ENCODE measurements at regions of chr7 and their contacts with region 1.

Region 1: DNA sequence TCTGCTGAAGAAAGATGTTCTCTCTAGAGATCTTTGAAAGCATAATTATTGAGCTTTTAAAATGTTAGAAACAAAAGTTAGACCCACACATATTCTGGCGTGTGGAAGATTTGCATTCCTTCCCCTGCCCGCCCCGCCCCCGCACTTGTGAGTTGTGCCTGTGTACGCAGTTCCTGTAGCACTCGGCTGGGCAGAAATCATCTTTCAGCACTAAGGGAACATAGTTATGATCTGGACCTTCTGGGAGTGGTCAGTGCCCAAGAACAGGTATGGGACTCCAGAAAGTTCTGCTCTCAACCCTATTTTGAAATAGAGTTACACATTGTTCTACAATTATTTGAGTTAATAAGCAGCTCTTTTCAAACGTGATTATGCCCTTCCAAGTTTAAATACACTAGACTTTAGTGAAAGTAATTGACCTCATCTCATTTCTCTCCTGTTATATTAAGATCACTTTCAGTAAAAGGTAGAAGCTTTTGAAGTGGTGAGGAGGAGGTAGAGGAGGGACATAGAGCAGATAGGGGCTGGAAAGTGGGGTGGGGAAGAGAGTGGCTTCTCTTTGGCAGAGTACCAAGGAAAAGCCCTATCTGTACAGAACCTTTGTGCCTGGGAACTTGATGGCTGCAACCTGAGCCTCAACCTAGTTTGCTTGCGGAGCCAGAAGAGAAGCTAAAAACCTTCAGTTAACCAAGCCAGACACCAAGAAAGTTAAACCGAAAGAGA is 5.7 kb downstream of the BLVRA start:
- DNase-seq: peak; percentile 77
- H3K4me3 Mint-ChIP-seq: peak overlapping the region; percentile 62
- H3K27ac Mint-ChIP-seq: peak overlapping the region; percentile 81
- H3K4me1 Mint-ChIP-seq: peaks cover 36% of the 10 kb centered on the region
- H3K27me3 Mint-ChIP-seq: no peaks in the 10 kb centered on the region
- CTCF ChIP-seq: no peak

Region 2: DNA sequence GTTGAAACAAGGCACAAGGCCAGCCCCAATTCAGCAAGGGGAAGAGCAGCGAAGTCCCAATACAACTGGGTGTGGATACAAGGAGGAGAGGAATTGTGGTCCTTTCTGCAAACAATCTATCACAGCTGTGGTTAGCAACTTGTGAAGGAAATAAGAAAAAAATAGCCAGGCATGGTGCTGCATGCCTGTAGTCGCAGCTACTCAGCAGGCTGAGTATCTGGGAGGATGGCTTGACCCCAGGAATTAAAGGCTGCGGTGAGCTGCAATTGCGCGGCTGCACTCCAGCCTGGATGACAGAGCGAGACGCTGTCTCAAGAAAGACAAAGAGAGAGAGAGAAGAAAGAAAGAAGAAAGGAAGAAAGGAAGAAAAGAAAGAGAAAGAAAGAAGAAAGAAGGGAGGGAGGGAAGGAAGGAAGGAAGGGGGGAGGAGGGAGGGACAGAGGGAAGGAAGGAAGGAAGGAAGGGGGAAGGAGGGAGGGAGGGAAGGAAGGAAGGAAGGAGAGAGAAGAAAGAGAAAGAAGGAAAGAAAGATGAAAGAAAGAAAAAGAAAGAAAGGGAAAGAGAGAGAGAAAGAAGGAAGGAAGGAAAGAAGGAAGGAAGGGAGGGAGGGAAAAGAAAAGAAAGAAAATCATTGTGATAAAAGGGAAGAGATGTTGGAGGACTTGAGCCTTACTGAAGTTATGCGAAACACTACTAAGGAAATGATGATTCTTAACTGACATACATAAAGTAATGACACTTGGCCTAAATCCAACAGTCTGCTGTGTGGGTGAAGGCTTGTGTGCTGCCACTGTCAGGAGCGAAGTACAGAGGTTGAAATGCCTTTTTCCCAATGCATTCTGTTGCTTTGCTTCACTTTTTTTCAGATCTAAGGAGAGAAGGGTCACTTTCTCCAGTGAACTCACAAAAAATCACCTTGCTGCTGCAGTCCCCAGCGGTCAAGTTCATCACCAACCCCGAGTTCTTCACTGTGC is 298.3 kb before region 1 on chr7:
- CTCF ChIA-PET with region 1: no interaction called
- POLR2A ChIA-PET with region 1: no interaction called
- intact Hi-C with region 1: no loop called
- DNase-seq: peak; percentile 71
- H3K4me3 Mint-ChIP-seq: peak overlapping the region; percentile 34
- H3K27ac Mint-ChIP-seq: no peak overlapping the region
- H3K4me1 Mint-ChIP-seq: peaks cover 39% of the 10 kb centered on the region
- H3K27me3 Mint-ChIP-seq: no peaks in the 10 kb centered on the region
- CTCF ChIP-seq: no peak

Region 3: DNA sequence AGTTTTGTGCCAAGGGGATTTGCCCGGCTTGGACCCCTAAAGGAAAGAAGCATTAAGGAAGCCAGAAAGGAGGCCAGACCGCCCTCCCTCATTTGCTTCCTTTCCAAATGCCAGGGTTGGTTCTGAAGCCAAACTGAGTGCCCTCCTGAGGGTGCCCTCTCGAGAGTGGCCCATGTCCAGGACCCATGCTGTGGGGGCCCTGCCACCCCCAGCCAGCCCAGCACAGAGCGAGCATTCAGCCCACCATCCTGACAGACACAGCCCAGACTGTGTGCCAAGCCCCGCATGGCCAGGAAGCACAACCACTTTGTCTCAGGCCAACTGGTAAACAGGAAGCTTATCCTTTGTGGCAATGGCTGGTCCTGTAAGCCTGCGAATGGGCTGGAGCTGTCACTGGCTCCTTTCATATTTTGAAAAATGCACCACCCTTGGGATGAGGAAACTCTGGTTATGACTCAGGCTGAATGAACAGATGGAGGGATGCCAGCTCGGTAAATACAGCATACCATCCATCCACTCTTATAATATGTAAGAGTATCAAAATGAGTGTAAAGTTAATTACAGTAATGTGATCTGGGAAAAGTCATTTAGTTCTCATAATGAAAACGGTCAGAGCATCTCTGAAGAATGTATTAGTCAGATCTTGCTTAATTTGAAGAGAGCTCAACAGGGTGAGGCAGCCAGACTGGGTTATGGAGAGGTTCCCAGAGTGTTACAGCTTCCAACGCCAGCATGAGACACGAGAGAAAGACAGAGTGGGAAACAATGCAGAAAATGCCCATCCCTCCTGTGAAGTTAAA is 116.3 kb before region 1 on chr7:
- CTCF ChIA-PET with region 1: no interaction called
- POLR2A ChIA-PET with region 1: interaction called, 13 read pairs
- intact Hi-C with region 1: no loop called
- DNase-seq: peak; percentile 98
- H3K4me3 Mint-ChIP-seq: peak overlapping the region; percentile 38
- H3K27ac Mint-ChIP-seq: peak overlapping the region; percentile 89
- H3K4me1 Mint-ChIP-seq: peaks cover 54% of the 10 kb centered on the region
- H3K27me3 Mint-ChIP-seq: no peaks in the 10 kb centered on the region
- CTCF ChIP-seq: no peak

Region 4: GRCh38 chr7:43729214-43729923 is 34.8 kb before region 1 on chr7 and contains the start of gene COA1:
- CTCF ChIA-PET with region 1: interaction called, 4 read pairs
- POLR2A ChIA-PET with region 1: interaction called, 188 read pairs
- intact Hi-C with region 1: loop called (anchors 2 kb)
- DNase-seq: peak; percentile 89
- H3K4me3 Mint-ChIP-seq: peak within 1 kb of the TSS; percentile 87
- H3K27ac Mint-ChIP-seq: peak within 1 kb of the TSS; percentile 77
- H3K4me1 Mint-ChIP-seq: peaks cover 4% of the 10 kb centered on the region
- H3K27me3 Mint-ChIP-seq: no peaks in the 10 kb centered on the region
- CTCF ChIP-seq: no peak
- total RNA-seq, gene COA1: 65.5 and 68.5 TPM in 2 replicates

Region 5: DNA sequence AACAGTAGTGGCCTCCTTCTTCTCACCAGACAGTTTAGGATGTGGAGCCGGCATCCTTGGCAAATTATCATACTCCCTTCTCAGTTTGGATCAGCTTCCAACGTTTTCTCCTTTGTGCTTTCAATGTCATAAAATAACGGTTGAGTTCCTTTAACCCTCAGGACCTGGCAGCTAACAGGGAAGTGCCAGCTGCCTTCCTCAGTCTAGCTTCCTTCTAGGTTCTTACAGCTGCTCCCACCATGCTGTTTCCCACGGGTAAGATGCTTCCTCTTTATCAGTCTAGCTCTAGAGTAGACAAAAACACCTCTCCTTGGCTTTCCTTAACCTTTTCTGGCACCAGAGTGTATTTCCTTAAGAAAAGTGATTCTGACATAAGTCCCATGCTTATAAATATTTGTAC is 27.5 kb after region 1 on chr7:
- CTCF ChIA-PET with region 1: interaction called, 6 read pairs
- POLR2A ChIA-PET with region 1: interaction called, 10 read pairs
- intact Hi-C with region 1: no loop called
- DNase-seq: no peak
- H3K4me3 Mint-ChIP-seq: no peak overlapping the region
- H3K27ac Mint-ChIP-seq: no peak overlapping the region
- H3K4me1 Mint-ChIP-seq: no peaks in the 10 kb centered on the region
- H3K27me3 Mint-ChIP-seq: no peaks in the 10 kb centered on the region
- CTCF ChIP-seq: no peak

Region 6: GRCh38 chr7:43815373-43815772 is 51.2 kb after region 1 on chr7:
- CTCF ChIA-PET with region 1: no interaction called
- POLR2A ChIA-PET with region 1: no interaction called
- intact Hi-C with region 1: no loop called
- DNase-seq: no peak
- H3K4me3 Mint-ChIP-seq: no peak overlapping the region
- H3K27ac Mint-ChIP-seq: no peak overlapping the region
- H3K4me1 Mint-ChIP-seq: peaks cover 6% of the 10 kb centered on the region
- H3K27me3 Mint-ChIP-seq: no peaks in the 10 kb centered on the region
- CTCF ChIP-seq: no peak

Region 7: DNA sequence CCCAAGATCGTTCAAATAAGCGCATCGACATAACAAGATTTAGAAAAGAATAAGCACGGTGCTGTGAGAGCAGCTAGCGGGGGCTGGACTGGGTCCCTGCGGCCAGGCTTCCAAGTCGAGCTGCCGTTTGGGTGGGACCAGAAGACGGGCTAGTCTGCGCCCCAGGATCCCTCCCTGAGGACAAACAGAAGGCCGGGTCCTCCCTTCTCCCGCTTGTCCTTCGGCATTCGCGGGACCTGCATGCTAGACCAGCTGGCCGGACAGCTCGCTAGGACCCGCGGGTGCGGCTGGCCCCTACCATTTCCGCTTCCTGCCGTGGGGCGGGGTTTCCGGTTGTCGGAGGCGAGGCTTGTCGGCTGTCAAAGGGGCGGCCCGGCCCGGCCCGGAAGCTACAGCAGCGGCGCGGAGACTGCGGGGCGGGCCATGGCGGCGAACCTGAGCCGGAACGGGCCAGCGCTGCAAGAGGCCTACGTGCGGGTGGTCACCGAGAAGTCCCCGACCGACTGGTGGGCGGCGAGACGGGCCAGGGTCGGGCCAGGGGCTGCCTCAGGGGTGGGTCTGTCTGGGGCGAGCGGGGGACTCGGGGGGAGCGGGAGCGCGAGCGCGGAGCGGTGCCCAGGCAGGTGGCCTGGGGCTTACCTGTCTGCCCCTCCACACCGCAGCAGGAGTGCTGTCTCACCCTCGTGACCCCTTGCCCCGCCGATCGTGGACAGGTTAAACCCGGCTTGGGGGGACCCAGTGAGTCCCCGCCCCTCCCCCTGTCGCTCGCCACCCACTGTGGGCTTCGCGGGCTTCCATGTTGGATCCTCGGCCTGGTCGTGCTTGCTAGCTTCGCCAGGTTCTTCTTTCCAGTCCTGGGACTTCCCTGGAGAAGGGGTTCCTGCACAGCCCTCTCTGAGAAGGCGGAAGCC is 280.4 kb after region 1 on chr7 and contains the start of gene DBNL:
- CTCF ChIA-PET with region 1: no interaction called
- POLR2A ChIA-PET with region 1: no interaction called
- intact Hi-C with region 1: no loop called
- DNase-seq: peak; percentile 86
- H3K4me3 Mint-ChIP-seq: peak within 1 kb of the TSS; percentile 78
- H3K27ac Mint-ChIP-seq: peak within 1 kb of the TSS; percentile 86
- H3K4me1 Mint-ChIP-seq: peaks cover 26% of the 10 kb centered on the region
- H3K27me3 Mint-ChIP-seq: no peaks in the 10 kb centered on the region
- CTCF ChIP-seq: no peak
- total RNA-seq, gene DBNL: 49.7 and 52.9 TPM in 2 replicates